Gastrocnemius medialis (tissue), 4 donors: ENCODE measurements at regions of chr5 and their contacts with region 1.

Region 1: DNA sequence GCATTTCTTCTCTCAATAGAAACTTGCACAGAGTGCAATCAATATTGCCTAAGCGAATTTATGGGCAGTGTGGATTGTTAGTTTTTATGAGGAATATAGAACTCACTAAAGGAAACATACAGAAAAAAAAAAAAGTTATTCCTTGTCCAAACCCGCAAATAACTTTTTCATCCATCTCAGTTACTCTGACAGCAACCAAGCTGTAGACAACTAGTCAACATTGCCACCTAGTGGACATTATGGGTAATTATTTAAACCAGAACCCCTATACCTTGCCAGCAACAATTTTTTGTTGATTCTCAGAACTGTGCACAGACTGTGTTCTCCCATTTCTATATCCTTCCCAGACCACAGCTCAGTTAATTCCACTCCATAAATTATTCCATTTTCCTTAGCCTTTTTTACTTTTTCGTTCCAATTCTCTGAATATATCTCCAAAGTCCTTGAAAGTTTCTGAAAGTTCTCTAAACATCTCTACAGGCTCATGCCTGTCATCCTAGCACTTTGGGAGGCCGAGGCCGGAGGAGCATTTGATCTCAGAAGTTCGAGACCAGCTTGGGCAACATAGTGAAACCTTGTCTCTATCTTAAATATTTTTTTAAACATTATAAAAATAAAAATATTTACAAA is 2.6 kb upstream of the AFAP1L1 start:
- DNase-seq: no peak
- ATAC-seq: no peak
- H3K4me3 ChIP-seq: no peak overlapping the region
- H3K27ac ChIP-seq: no peak overlapping the region
- H3K4me1 ChIP-seq: peaks cover 12 to 20% of the 10 kb centered on the region in 2 donors
- H3K27me3 ChIP-seq: no peaks in the 10 kb centered on the region
- CTCF ChIP-seq: peak; percentile 70 to 88 (median 75)
- POLR2A ChIP-seq: no peak

Region 2: GRCh38 chr5:149141224-149141956 is 127.7 kb before region 1 on chr5 and contains the start of gene ABLIM3:
- in situ Hi-C with region 1: no loop called
- intact Hi-C with region 1: loop called (anchors 5 kb)
- DNase-seq: peak; percentile 43 to 72
- ATAC-seq: peak; percentile 73 to 82
- H3K4me3 ChIP-seq: peak within 1 kb of the TSS; percentile 87 to 93 (median 91)
- H3K27ac ChIP-seq: peak within 1 kb of the TSS; percentile 86 to 91 (median 88)
- H3K4me1 ChIP-seq: peaks cover 26% of the 10 kb centered on the region in 2 donors
- H3K27me3 ChIP-seq: no peaks in the 10 kb centered on the region
- CTCF ChIP-seq: peak; percentile 85 to 96 (median 96)
- POLR2A ChIP-seq: peak; percentile 36 to 53
- total RNA-seq, gene ABLIM3: 37.5 to 155 (median 67.7) TPM

Region 3: DNA sequence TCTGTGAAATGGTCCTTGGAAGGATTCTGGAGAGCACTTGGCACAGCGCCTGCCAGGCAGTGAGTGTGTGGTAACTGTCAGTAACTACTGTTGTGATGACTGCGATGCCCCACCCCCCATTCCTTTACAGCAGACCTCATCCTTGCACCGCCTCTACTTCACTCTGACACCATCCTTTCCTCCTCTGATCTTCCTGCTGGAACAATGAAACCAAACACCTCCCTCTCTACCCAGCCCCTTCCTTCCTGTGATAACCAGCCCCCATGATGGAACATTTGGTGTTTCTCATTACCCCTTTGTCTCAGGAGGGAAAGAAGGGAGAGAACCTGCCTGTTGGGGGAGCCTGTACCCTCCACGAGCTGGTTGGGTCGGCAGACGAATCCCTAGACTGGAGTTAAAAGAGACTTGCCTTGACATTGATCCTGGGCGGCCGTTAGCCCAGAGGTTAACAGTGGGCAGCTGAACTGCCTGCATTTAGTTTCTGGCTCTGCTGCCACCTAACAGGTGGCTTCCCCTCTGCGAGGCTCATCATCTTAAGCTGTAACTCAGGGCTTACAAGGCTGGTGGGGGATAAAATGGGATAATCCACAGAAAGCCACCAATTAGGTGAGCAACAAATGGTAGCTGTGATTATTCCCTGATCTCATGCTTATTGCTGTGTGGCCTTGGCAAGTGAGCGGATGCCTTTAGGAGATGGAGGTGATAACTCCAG is 42.1 kb after region 1 on chr5:
- in situ Hi-C with region 1: no loop called
- intact Hi-C with region 1: loop called (anchors 5 kb)
- DNase-seq: no peak
- ATAC-seq: no peak
- H3K4me3 ChIP-seq: no peak overlapping the region
- H3K27ac ChIP-seq: peak overlapping the region in 3 of 4 donors; percentile 37 to 57 (median 42)
- H3K4me1 ChIP-seq: peaks cover 18 to 27% of the 10 kb centered on the region in 2 donors
- H3K27me3 ChIP-seq: no peaks in the 10 kb centered on the region
- CTCF ChIP-seq: no peak
- POLR2A ChIP-seq: no peak

Region 4: DNA sequence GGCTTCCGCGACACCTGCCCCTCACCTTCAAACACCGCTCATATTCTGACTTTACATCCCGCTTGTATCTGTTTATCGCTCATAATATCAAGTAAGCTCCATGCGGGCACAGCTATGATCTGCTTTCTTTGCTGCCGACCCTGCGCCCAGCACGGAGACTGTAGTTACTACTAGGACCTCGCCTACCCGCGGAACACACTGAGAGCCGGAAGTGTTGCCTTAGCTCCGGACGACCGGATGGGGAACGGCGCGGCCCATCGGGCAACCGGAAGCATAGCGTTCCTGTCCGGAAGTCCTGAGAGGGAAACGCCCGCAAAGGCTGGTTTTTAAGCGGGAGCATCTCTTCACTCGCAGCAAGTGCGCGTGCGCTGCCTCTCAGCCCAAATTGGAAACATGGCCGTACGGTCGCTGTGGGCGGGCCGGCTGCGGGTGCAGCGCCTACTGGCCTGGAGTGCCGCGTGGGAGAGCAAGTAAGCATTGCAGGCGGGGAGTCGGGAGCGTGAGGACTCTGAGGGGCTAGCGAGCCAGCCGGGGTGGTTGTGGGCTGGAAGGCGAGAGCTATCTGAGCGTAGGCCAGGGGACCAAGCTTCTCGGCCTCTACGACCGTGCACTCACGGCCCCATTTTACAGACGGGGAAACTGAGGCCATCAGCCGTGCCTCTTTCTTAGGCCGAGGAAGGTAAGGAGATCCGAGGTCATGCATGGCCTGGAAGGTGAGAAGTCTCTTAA is 76.3 kb after region 1 on chr5 and contains the start of gene GRPEL2:
- in situ Hi-C with region 1: no loop called
- intact Hi-C with region 1: loop called (anchors 5 kb)
- DNase-seq: peak; percentile 93 to 95
- ATAC-seq: peak; percentile 99
- H3K4me3 ChIP-seq: peak within 1 kb of the TSS; percentile 58 to 96 (median 79)
- H3K27ac ChIP-seq: peak within 1 kb of the TSS; percentile 84 to 89 (median 87)
- H3K4me1 ChIP-seq: peaks cover 13 to 16% of the 10 kb centered on the region in 2 donors
- H3K27me3 ChIP-seq: no peaks in the 10 kb centered on the region
- CTCF ChIP-seq: no peak
- POLR2A ChIP-seq: peak; percentile 57 to 69
- total RNA-seq, gene GRPEL2: 7.8 to 13.3 (median 9.9) TPM

Region 5: GRCh38 chr5:149367249-149367971 is 98.4 kb after region 1 on chr5:
- in situ Hi-C with region 1: loop called in 3 of 4 experiments (anchors 5 kb)
- intact Hi-C with region 1: loop called (anchors 1 kb)
- DNase-seq: no peak
- ATAC-seq: peak; percentile 41 to 49
- H3K4me3 ChIP-seq: no peak overlapping the region
- H3K27ac ChIP-seq: no peak overlapping the region
- H3K4me1 ChIP-seq: peaks cover 5 to 8% of the 10 kb centered on the region in 2 donors
- H3K27me3 ChIP-seq: no peaks in the 10 kb centered on the region
- CTCF ChIP-seq: peak in 4 of 5 experiments; percentile 25 to 75 (median 64)
- POLR2A ChIP-seq: no peak

Region 6: GRCh38 chr5:149434162-149435014 is 165.3 kb after region 1 on chr5:
- in situ Hi-C with region 1: loop called in 1 of 4 experiments (anchors 10 kb)
- intact Hi-C with region 1: no loop called
- DNase-seq: peak; percentile 31 to 52
- ATAC-seq: peak; percentile 50 to 64
- H3K4me3 ChIP-seq: no peak overlapping the region
- H3K27ac ChIP-seq: peak overlapping the region in 1 of 4 donors; percentile 27
- H3K4me1 ChIP-seq: peaks cover 0 to 10% of the 10 kb centered on the region in 2 donors
- H3K27me3 ChIP-seq: no peaks in the 10 kb centered on the region
- CTCF ChIP-seq: peak; percentile 63 to 90 (median 78)
- POLR2A ChIP-seq: no peak

Region 7: DNA sequence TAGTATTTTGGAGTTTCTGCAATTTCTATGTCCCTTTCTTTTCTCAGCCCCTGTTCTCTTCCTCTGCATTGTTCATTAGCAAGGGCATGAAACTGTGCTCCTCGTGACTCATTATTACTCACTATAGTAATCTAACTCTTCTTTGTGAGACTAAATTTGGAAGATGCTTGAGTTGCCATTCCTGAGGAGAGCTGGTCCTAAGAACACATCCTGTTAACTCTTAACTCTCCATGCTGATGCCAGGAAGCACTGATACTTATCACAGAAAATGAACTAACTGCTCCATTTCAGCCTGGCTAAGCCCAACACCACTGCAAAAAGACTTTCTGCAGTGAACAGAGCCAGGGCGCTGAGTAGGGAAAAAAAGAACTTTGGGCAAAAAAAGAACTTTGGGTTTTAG is 292.8 kb after region 1 on chr5:
- in situ Hi-C with region 1: loop called in 1 of 4 experiments (anchors 10 kb)
- intact Hi-C with region 1: loop called (anchors 10 kb)
- DNase-seq: peak in 1 of 2 donors; percentile 27
- ATAC-seq: peak; percentile 96 to 98
- H3K4me3 ChIP-seq: peak overlapping the region in 3 of 4 donors; percentile 3 to 8 (median 4)
- H3K27ac ChIP-seq: peak overlapping the region; percentile 74 to 83 (median 80)
- H3K4me1 ChIP-seq: peaks cover 20 to 35% of the 10 kb centered on the region in 2 donors
- H3K27me3 ChIP-seq: no peaks in the 10 kb centered on the region
- CTCF ChIP-seq: no peak
- POLR2A ChIP-seq: no peak

Region 8: DNA sequence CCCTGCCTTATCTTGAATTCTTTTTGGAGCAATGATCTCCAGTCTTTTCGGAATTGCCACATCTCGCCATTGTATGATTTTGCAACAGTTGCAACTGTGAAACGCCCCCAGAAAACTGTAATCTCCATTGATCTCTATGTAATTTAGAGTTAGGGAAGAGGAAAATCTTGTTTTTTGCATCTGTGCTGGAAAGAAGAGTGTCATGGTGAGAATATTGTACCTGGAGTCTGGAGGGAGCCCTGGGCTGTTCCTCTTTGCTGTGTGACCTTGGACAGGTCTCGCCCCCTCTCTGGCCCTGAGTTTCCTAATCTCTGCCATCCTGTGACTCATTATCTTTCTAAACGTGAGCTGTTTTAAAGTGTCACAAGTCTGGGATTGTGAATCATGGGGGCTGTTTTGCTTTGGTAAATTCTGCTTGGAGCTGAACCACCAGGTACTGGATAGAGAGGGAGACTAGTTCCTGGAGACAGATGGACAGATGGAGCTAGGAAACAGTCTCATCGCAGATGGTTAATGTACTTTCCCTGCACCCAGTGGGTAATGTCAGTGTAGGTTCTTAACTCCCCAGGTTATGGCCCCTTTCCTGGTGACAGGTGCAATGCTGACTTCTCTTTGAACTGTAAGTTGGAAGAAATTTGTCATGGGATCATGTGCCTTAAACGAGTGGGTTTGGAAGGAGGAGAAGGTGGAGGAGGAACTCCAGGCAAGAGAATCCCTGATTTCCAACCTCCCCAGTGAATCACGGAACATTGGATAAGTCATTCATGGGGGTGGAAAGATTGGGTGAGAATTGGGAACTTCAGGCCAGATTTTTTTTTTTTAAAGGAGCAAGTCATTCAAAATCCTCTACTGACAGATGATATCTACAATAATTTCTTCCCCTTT is 480.7 kb after region 1 on chr5:
- in situ Hi-C with region 1: no loop called
- intact Hi-C with region 1: no loop called
- DNase-seq: no peak
- ATAC-seq: peak; percentile 25 to 34
- H3K4me3 ChIP-seq: no peak overlapping the region
- H3K27ac ChIP-seq: peak overlapping the region; percentile 84 to 99 (median 92)
- H3K4me1 ChIP-seq: peaks cover 47 to 58% of the 10 kb centered on the region in 2 donors
- H3K27me3 ChIP-seq: no peaks in the 10 kb centered on the region
- CTCF ChIP-seq: no peak
- POLR2A ChIP-seq: no peak